Endothelial cell of umbilical vein (primary cell): ENCODE measurements at regions of chr10 and their contacts with region 1.

Region 1: DNA sequence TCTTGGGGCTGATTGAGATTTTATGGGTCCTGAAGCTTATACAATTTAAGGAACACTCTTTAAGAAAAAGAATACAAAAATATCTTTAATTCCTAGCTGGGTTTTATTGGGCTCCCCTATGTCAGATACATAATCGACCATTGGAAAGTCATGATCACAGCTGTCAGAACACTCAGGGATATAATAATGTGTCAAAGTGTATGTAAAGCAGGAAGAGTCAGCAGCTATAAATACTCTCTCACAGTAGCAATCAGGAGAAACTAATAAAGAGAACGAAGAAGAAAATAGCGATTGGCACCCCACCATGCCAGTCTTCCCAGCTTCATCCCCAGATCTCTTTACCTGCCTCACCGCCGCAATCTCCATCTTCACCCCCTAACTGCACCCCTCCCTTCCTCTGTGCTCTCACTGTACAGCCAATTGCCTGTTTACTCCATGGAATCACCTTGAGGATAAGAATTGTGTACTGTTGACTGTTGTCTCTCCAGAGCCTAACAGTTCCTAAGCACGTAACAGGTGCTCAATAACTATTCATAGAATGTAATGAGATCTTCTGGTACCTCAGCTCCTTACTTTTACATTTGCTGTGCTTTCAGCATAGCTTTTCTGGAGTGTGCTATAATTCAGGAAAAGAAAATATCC is 24.0 kb upstream of the WNT8B start:
- DNase-seq: no peak
- H3K4me3 ChIP-seq: no peak overlapping the region
- H3K27ac ChIP-seq: no peak overlapping the region
- H3K4me1 ChIP-seq: no peaks in the 10 kb centered on the region
- H3K27me3 ChIP-seq: peaks cover 2 to 4% of the 10 kb centered on the region in 2 experiments
- CTCF ChIP-seq: no peak
- POLR2A ChIP-seq: no peak

Region 2: GRCh38 chr10:100338434-100339036 is 100.3 kb before region 1 on chr10:
- CTCF ChIA-PET with region 1: interaction called, 110 read pairs
- POLR2A ChIA-PET with region 1: no interaction called
- dilution Hi-C with region 1: no loop called
- intact Hi-C with region 1: loop called (anchors 1 kb)
- DNase-seq: peak; percentile 63
- H3K4me3 ChIP-seq: no peak overlapping the region
- H3K27ac ChIP-seq: no peak overlapping the region
- H3K4me1 ChIP-seq: no peaks in the 10 kb centered on the region
- H3K27me3 ChIP-seq: peaks cover 7 to 8% of the 10 kb centered on the region in 2 experiments
- CTCF ChIP-seq: peak; percentile 81 to 88
- POLR2A ChIP-seq: no peak